Calu3 (cell line): ENCODE measurements at regions of chr11 and their contacts with region 1.

Region 1: DNA sequence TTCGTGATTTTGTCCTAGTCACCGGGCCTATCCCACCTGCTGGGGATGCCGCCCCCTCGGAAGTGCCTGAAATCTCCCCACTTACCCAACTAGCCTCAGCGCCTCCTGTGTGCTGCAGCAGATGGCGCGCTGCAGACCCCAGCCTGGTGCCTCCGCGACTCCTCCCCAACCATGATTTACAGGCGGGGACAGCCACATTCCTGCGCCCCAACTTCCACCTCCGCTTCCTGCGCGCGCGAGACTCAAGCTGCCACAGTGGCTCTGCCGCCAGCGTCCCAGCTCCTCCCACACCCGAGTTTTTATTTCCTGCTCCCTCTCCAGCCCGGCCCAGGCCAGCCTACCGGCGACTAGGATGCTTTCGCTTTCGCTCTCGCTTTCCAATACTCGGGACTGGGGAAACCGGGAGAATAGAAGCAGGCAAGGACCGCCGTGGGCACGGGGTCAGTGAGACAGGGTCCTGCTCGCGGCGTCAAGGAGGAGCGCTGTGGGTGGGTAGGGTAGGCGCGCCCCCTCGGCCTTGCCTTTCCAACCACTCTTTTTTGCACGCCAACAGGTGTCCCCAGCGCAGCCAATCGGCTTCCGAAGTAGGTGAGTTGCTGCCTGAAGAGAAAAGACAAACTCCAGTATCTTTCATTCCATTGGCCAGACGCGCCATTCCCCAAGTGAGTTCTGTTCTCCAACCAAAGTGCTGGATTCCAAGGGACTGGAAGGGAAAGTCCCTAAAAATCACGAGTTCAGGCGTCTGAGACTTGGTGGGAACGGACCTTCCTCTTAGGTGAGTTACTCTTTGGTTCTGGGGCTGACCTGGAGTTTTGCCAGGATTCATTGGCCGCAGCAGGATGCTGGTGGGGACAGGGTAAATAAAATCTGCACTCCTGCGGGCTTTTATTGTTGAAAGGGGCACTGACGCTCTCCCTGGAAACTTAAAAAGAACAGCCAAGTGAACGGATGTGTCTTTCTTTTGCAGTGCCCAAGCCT is at the start of gene FAM111A:
- DNase-seq: peak; percentile 88
- H3K4me3 Mint-ChIP-seq: peak within 1 kb of the TSS; percentile 97
- H3K27ac Mint-ChIP-seq: peak within 1 kb of the TSS; percentile 93
- H3K4me1 Mint-ChIP-seq: peaks cover 48% of the 10 kb centered on the region
- H3K27me3 Mint-ChIP-seq: no peaks in the 10 kb centered on the region
- CTCF ChIP-seq: peak; percentile 14
- total RNA-seq, gene FAM111A: 87.9 and 91.6 TPM in 2 replicates

Region 2: GRCh38 chr11:58923300-58923788 is 219.5 kb before region 1 on chr11:
- CTCF ChIA-PET with region 1: no interaction called
- intact Hi-C with region 1: loop called (anchors 10 kb)
- DNase-seq: no peak
- H3K4me3 Mint-ChIP-seq: peak overlapping the region; percentile 59
- H3K27ac Mint-ChIP-seq: no peak overlapping the region
- H3K4me1 Mint-ChIP-seq: peaks cover 17% of the 10 kb centered on the region
- H3K27me3 Mint-ChIP-seq: no peaks in the 10 kb centered on the region
- CTCF ChIP-seq: no peak

Region 3: DNA sequence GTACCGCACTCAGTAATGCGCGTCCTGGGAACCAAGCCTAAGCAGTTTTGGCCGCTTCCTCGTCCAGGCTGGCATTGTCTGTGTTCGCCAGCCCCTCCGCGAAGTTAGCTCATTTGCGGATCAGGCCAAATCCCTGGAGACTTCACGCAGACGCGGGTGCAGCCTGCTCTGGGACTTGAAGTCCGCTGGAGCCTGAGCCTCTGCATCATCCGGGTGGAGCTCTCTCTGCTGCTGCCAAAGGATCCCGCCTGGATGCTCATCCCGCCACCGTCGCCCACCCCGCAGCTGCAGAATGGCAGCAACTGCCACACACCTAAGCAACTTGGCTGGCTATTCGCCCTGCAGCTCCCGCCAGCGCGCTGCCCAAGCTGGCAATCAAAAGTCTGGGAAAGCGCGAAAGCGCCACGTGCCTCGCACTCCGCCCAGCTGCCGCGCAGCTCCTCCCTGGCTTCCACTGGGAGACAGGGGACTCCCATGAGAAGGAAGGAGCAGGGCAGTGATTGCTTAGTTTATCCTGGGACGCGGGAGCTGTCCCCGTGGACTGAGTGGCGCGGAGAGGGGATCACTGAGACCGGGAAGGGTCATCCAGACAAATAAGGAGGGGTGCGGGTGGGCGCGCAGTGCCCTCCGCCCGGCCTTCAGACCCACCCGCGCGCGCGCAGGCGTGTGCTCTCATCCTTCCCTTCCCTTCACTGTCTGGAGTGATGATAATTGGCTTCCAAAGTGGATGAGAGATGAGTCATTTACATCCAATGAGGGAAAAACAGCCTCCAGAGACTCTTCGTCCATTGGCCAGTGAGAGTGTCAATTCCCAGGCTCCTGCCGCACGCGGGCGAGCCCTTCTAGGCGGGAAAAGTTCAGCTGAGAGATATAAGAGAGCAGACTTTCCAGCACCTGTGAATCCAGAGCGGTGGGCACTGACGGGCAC is 80.0 kb before region 1 on chr11:
- CTCF ChIA-PET with region 1: no interaction called
- intact Hi-C with region 1: no loop called
- DNase-seq: no peak
- H3K4me3 Mint-ChIP-seq: no peak overlapping the region
- H3K27ac Mint-ChIP-seq: no peak overlapping the region
- H3K4me1 Mint-ChIP-seq: no peaks in the 10 kb centered on the region
- H3K27me3 Mint-ChIP-seq: peaks cover 88% of the 10 kb centered on the region
- CTCF ChIP-seq: no peak

Region 4: DNA sequence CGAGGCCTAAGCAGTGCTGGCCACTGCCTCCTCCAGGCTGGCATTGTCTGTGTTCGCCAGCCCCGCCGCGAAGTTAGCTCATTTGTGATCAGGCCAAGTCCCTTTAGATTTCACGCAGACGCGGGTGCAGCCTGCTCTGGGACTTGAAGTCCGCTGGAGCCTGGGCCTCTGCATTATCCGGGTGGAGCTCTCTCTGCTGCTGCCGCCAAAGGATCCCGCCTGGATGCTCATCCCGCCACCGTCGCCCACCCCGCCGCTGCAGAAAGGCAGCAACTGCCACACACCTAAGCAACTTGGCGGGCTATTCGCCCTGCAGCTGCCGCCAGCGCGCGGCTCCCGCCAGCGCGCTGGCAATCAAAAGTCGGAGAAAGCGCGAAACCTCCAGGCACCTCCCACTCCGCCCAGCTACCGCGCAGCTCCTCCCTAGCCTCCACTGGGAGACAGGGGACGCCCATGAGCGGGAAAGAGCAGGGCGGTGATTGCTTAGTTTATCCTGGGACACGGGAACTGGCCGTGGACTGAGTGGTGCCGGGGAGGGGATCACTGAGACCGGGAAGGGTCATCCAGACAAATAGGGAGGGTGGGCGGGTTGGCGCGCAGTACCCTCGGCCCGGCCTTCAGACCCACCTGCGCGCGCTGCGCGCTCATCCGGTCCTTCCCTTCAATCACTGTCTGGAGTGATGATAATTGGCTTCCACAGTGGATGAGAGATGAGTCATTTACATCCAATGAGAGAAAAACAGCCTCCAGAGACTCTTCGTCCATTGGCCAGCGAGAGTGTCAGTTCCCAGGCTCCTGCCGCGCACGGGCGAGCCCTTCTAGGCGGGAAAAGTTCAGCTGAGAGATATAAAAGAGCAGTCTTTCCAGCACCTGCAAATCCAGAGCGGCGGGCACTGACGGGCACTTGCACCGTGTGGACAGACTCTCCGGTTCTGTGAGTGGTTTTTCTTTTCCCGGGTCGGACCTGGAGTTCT is 36.2 kb before region 1 on chr11 and contains the start of gene FAM111B:
- CTCF ChIA-PET with region 1: interaction called, 10 read pairs
- intact Hi-C with region 1: loop called (anchors 2 kb)
- DNase-seq: peak; percentile 87
- H3K4me3 Mint-ChIP-seq: peak within 1 kb of the TSS; percentile 93
- H3K27ac Mint-ChIP-seq: peak within 1 kb of the TSS; percentile 87
- H3K4me1 Mint-ChIP-seq: peaks cover 39% of the 10 kb centered on the region
- H3K27me3 Mint-ChIP-seq: no peaks in the 10 kb centered on the region
- CTCF ChIP-seq: no peak
- total RNA-seq, gene FAM111B: 35.5 and 39.5 TPM in 2 replicates

Region 5: GRCh38 chr11:59117774-59118173 is 25.0 kb before region 1 on chr11:
- CTCF ChIA-PET with region 1: no interaction called
- intact Hi-C with region 1: no loop called
- DNase-seq: no peak
- H3K4me3 Mint-ChIP-seq: no peak overlapping the region
- H3K27ac Mint-ChIP-seq: no peak overlapping the region
- H3K4me1 Mint-ChIP-seq: no peaks in the 10 kb centered on the region
- H3K27me3 Mint-ChIP-seq: no peaks in the 10 kb centered on the region
- CTCF ChIP-seq: no peak

Region 6: GRCh38 chr11:59501931-59502330 is 359.1 kb after region 1 on chr11:
- CTCF ChIA-PET with region 1: no interaction called
- intact Hi-C with region 1: no loop called
- DNase-seq: no peak
- H3K4me3 Mint-ChIP-seq: no peak overlapping the region
- H3K27ac Mint-ChIP-seq: no peak overlapping the region
- H3K4me1 Mint-ChIP-seq: no peaks in the 10 kb centered on the region
- H3K27me3 Mint-ChIP-seq: peaks cover 62% of the 10 kb centered on the region
- CTCF ChIP-seq: no peak

Region 7: DNA sequence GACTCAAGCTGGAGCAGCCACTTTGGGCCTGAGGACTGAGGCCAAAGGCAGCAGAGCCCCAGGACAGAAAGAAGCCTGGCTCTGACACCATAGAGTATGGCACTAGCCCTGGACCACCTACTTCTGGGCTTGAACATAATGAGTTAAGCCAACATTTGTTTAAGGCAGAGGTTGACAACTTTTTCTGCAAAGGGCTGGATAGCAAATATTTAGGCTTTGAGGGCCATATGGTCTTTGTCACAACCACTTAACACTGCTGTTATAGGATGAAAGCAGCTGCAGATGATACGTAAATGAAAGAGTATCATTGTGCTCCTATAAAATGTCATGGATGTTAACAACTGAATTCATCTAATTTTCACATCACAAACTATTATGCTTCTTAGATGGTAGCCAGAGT is 456.1 kb after region 1 on chr11:
- CTCF ChIA-PET with region 1: no interaction called
- intact Hi-C with region 1: no loop called
- DNase-seq: no peak
- H3K4me3 Mint-ChIP-seq: no peak overlapping the region
- H3K27ac Mint-ChIP-seq: no peak overlapping the region
- H3K4me1 Mint-ChIP-seq: no peaks in the 10 kb centered on the region
- H3K27me3 Mint-ChIP-seq: no peaks in the 10 kb centered on the region
- CTCF ChIP-seq: no peak